HEK293T (cell line): ENCODE measurements at regions of chr1 and their contacts with region 1.

Region 1: GRCh38 chr1:109277434-109278204 is 5.3 kb downstream of the PSRC1 start:
- DNase-seq: peak; percentile 90

Region 2: DNA sequence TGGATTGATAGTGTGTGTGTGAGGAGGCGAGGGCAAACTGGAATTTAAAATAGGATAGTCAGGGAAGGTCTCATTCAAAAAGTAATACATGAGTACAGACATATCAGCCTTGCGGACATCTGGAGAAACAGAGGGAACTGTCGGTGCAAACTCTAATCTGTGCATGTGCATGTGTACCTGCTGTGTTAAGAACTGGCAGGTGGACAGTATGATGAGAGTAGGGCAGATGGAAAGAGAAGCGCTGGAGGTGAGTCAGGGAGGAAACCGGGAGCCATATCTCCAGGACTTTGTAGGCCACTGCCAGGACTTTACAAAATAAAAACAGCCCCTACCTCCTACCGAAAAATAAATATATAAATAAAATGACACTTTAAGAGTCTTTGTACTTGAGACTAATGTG is 60.5 kb after region 1 on chr1:
- CTCF ChIA-PET with region 1: no interaction called
- POLR2A ChIA-PET with region 1: no interaction called
- DNase-seq: no peak

Region 3: GRCh38 chr1:109350655-109351054 is 73.0 kb after region 1 on chr1:
- CTCF ChIA-PET with region 1: interaction called, 14 read pairs
- POLR2A ChIA-PET with region 1: no interaction called
- DNase-seq: no peak

Region 4: DNA sequence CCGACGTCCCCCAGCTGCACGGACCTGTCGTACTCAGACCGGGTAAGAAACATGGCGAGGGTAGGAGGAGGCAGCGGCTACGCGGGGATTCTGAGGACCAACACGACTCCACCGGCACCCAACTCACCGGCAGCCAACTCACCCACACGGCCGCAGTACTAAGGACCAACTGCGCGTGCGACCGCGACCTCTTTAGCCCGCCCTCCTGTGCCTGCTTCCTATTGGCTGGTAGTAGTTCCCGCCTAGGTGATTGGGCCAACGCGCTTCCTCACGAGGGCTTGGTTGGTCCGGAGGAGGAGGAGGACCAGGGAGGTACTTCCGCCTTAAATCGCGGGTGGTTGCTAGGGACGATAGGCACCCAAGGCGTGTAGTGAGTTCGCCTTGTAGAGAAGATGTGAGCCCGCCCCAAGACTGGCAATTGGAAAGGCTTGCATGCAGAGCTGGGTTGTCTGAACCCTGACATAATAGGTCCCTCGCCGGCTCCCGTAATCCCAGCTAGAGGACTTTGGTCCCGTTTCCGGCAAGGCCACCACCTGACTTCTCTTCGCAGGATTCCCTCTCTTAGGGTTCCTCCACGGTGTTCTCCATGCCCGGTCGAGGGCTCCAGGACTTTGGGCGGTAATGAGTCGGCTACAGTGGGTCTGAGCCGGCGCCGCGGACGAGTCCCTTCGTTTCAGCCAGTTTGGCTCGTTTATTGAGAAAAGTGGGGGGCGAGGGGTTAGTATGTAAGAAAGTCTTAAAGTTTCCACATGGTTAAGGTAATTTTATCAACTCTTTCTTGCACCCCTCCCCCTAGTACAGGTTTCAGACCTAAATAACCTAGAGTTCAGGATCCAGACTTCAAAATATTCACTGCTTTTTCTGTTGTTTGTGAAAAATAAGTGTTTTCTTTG is 148.9 kb after region 1 on chr1 and contains the start of gene PSMA5:
- CTCF ChIA-PET with region 1: interaction called, 10 read pairs
- POLR2A ChIA-PET with region 1: interaction called, 7 read pairs
- DNase-seq: peak; percentile 98